SK-N-SH (cell line): ENCODE measurements at regions of chr3 and their contacts with region 1.

Region 1: GRCh38 chr3:8769088-8769822 is at the start of gene OXTR:
- DNase-seq: peak; percentile 96
- H3K4me3 ChIP-seq: peak within 1 kb of the TSS; percentile 49 to 61
- H3K27ac ChIP-seq: 0 out of 4 replicates have a peak within 1 kb of the TSS, but pooled peaks of 1 of the 2 experiments have one; percentile 2
- H3K4me1 ChIP-seq: peaks cover 0 to 16% of the 10 kb centered on the region in 2 experiments; a peak in 3 of 4 replicates
- H3K27me3 ChIP-seq: no peaks in the 10 kb centered on the region
- CTCF ChIP-seq: peak; percentile 96
- EP300 ChIP-seq: no peak
- RAD21 ChIP-seq: peak; percentile 91
- polyA plus RNA-seq, gene OXTR: 1.8 and 2.5 TPM in 2 replicates

Region 2: GRCh38 chr3:7897655-7898054 is 871.6 kb before region 1 on chr3:
- CTCF ChIA-PET with region 1: no interaction called
- POLR2A ChIA-PET with region 1: no interaction called
- DNase-seq: no peak
- H3K4me3 ChIP-seq: no peak overlapping the region
- H3K27ac ChIP-seq: no peak overlapping the region
- H3K4me1 ChIP-seq: no peaks in the 10 kb centered on the region
- H3K27me3 ChIP-seq: no peaks in the 10 kb centered on the region
- CTCF ChIP-seq: no peak
- EP300 ChIP-seq: no peak
- RAD21 ChIP-seq: no peak

Region 3: DNA sequence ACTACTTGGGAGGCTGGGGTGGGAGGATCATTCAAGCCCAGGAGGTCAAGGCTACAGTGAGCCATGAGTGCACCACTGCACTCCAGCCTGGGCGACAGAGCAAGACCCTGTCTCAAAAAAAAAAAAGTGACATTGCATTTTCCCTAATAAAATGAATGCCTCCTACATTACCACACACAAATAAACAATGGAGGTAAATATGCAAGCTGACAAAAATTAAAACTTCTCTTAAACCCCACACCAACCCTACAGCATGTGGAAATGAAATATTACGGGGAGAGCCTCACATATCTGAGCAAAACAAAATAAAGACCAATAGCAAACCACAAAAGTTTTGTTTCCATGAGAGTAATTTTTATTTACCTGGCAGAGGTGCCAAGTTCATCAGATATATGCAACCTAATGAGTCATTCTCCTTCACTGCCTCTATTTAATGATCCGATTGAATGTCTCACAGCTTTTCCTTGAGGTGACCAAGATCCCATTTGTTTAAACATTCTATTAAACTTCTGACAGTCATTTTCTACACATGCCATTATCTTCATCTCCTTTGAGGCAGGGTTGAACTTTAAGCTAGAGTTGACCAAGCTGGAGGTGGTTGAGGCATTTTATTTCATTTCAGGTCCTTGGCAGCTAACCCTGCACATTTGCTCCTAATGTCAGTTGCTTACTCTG is 45.0 kb before region 1 on chr3:
- CTCF ChIA-PET with region 1: interaction called, 10 read pairs
- POLR2A ChIA-PET with region 1: no interaction called
- DNase-seq: no peak
- H3K4me3 ChIP-seq: no peak overlapping the region
- H3K27ac ChIP-seq: no peak overlapping the region
- H3K4me1 ChIP-seq: no peaks in the 10 kb centered on the region; a peak in 1 of 4 replicates
- H3K27me3 ChIP-seq: no peaks in the 10 kb centered on the region
- CTCF ChIP-seq: no peak
- EP300 ChIP-seq: no peak
- RAD21 ChIP-seq: no peak

Region 4: GRCh38 chr3:8755563-8756237 is 13.6 kb before region 1 on chr3:
- CTCF ChIA-PET with region 1: interaction called, 31 read pairs
- POLR2A ChIA-PET with region 1: no interaction called
- DNase-seq: no peak
- H3K4me3 ChIP-seq: no peak overlapping the region
- H3K27ac ChIP-seq: no peak overlapping the region
- H3K4me1 ChIP-seq: no peaks in the 10 kb centered on the region
- H3K27me3 ChIP-seq: no peaks in the 10 kb centered on the region
- CTCF ChIP-seq: peak; percentile 32
- EP300 ChIP-seq: no peak
- RAD21 ChIP-seq: no peak

Region 5: GRCh38 chr3:8872291-8872690 is 103.0 kb after region 1 on chr3:
- CTCF ChIA-PET with region 1: interaction called, 11 read pairs
- POLR2A ChIA-PET with region 1: no interaction called
- DNase-seq: no peak
- H3K4me3 ChIP-seq: no peak overlapping the region
- H3K27ac ChIP-seq: 0 out of 4 replicates have a peak overlapping the region, but pooled peaks of 1 of the 2 experiments have one; percentile 7
- H3K4me1 ChIP-seq: peaks cover 0 to 23% of the 10 kb centered on the region in 2 experiments; a peak in 3 of 4 replicates
- H3K27me3 ChIP-seq: no peaks in the 10 kb centered on the region
- CTCF ChIP-seq: no peak
- EP300 ChIP-seq: no peak
- RAD21 ChIP-seq: no peak

Region 6: GRCh38 chr3:8938021-8938420 is 168.8 kb after region 1 on chr3:
- CTCF ChIA-PET with region 1: interaction called, 16 read pairs
- POLR2A ChIA-PET with region 1: no interaction called
- DNase-seq: no peak
- H3K4me3 ChIP-seq: no peak overlapping the region
- H3K27ac ChIP-seq: peak overlapping the region; percentile 67 to 89; a peak in 3 of 4 replicates
- H3K4me1 ChIP-seq: peaks cover 2 to 13% of the 10 kb centered on the region in 2 experiments; a peak in 3 of 4 replicates
- H3K27me3 ChIP-seq: no peaks in the 10 kb centered on the region
- CTCF ChIP-seq: peak; percentile 64
- EP300 ChIP-seq: no peak
- RAD21 ChIP-seq: peak; percentile 44; the same call in 1 of the 2 replicates

Region 7: DNA sequence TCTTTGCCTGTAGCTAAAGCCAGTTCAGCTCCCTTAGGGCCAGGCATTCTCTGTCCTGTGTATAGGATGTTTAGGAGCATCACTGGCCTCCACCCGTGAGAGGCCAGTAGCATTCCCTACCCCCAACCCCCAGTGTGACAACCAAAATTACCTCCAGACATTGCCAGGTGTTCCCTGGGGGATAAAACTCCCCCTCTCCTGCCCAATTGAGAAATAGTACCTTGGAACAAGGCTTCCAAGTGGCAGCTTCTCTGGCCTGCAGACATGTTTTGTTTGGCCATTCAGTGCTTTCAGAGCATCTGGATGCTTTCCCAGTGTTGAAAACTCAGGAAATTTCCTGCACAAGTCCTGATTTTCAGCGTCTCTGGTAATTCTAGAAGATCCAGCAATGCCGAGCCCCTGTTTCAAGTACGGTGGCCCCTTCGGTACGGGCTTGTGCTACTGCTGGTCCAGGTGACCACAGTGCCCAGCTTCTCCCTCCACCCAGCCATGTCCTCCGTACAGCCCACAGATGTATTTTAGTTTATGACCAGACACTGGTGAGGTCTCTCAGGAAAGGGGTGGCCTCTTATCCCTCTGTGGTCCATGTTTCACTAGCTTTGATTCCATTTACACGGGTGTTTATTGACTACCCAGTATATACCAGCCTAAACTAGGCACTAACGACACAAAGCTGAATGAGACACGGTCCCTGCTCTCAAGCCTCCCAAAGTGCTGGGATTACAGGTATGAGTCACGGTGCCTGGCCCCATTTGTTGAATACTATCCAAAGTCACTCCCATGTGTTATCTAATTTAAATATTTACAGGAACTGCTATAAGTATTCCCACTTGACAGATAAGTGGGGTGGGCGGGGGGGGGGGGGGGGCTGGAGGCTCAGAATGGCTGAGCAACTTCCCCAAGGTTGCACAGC is 319.4 kb after region 1 on chr3:
- CTCF ChIA-PET with region 1: no interaction called
- POLR2A ChIA-PET with region 1: no interaction called
- DNase-seq: no peak
- H3K4me3 ChIP-seq: no peak overlapping the region
- H3K27ac ChIP-seq: no peak overlapping the region
- H3K4me1 ChIP-seq: peaks cover 0 to 5% of the 10 kb centered on the region in 2 experiments; a peak in 1 of 4 replicates
- H3K27me3 ChIP-seq: no peaks in the 10 kb centered on the region
- CTCF ChIP-seq: no peak
- EP300 ChIP-seq: no peak
- RAD21 ChIP-seq: no peak